Esophagus muscularis mucosa (tissue), 4 donors: ENCODE measurements at regions of chr1 and their contacts with region 1.

Region 1: DNA sequence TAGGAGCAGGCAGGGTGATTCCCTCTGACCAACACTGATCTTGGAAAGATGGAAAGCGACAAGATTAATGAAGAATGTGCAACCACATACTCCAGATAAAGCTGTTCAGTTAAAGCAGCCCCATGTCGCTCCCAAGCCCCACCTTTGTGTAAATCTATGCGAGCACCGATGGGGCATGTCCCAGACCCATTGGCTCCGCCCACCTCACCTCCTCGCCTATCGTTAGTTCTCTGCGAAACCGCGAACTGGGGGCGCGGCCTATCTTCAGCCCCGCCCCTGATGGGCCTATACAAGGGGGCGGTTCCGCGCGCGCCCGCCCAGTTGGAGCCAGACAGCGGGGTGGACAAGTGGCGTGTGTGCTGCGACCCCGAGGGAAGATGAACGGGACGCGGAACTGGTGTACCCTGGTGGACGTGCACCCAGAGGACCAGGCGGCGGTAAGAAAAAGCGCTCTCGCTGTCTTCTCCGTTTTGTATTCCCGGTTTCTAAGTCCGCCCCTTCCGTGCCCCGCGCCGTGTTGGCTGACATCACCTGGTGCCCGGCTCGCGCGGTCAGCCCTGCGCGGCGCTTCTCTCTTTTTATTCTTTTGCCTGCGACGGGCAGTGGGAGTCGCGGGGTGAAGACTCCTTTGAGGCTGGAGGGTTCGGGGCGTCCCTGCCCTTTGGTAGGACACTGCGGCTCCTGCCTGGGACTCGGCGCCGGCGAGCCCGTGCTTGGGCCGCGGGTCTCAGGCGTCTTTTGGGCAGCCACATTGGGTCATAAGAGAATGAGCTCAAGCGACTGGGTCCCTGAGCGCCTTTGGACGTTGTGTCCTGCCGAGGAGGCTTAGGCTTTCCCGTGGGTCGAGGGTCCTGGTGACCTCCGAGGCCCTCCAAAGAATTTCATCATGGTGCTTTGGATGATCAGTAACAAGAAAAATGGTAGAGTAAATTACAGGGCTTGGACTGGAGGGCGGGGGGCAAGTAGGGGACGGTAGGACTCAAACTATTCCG is at the start of gene TUFT1:
- DNase-seq: peak; percentile 98
- H3K4me3 ChIP-seq: peak within 1 kb of the TSS; percentile 73 to 81 (median 76)
- H3K27ac ChIP-seq: peak within 1 kb of the TSS; percentile 87 to 90 (median 88)
- H3K4me1 ChIP-seq: peaks cover 11 to 43% (median 36%) of the 10 kb centered on the region in 4 donors
- H3K27me3 ChIP-seq: no peaks in the 10 kb centered on the region
- CTCF ChIP-seq: no peak
- EP300 ChIP-seq: no peak
- POLR2A ChIP-seq: peak; percentile 86
- total RNA-seq, gene TUFT1: 10.4 to 24.2 (median 15.9) TPM

Region 2: DNA sequence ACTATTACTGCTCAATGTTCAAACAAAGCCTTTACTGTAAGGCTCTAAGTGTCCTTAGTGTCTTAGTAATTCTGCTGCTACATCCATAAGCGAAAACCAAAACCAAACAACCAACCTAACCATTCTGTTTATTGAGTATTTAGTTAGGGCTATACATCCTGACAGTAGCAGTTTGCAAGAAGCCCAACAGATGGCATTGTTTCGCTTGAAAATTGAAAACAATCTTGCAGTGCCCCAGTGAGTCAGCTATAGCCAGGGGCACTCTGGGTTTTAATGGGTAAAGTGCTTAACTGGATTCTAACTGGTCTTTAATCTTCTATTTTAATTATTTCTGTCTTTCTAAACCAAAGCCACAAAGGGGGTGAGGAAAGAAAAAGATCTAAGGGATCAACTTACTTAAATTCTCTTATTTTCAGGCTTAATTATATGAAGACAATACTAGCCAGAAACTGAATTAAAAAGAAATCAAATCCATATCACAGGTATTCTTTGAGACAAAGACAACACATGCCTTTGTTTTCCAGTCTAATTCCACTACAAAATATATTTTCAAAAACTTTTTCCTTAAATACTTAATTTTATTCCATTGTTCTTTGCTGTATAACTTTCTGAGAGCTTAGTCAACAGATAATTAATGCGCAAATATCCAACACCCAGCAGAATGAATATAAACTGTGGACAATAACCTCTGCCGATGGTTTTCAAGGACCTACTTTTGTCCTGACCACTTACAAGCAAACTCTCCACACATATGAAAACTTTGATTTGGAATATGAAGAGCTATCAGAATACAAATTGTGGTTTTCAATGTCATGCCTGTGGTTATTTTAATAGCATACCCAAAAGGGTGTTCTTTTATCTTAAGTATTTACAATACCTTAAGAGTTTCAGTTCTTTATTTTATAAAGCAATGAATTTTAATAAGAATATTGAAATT is 96.2 kb before region 1 on chr1:
- intact Hi-C with region 1: loop called (anchors 5 kb)
- DNase-seq: no peak
- H3K4me3 ChIP-seq: no peak overlapping the region
- H3K27ac ChIP-seq: peak overlapping the region; percentile 45 to 55 (median 55)
- H3K4me1 ChIP-seq: peaks cover 37 to 90% (median 76%) of the 10 kb centered on the region in 4 donors
- H3K27me3 ChIP-seq: no peaks in the 10 kb centered on the region
- CTCF ChIP-seq: peak; percentile 75 to 81 (median 80)
- EP300 ChIP-seq: no peak
- POLR2A ChIP-seq: no peak

Region 3: DNA sequence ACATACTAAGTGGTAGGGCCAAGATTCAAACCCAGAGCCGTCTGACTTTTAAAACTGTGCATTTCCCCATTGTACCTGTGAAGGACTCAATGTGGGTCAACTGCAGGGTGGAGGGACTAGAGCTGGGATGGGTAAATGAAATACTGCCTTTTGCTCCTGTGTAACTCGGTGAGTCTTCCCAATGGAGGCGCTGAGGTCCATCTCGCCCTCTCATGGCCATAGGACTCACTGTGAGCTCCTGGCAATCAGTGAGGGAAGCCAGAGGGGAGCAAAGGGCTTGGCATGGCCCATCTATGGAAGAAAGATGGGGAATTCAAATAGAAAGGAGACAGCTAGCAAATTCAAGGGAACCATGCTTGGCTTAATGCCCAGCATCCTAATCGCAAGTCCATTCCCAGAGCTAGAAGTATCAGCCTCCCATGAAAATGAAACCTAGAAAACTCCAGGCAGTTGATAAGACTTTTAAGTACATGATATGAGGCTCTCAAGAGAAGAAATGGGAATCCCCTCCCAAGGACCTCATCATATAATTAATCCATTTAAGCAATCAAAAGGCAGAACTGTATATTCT is 54.5 kb before region 1 on chr1:
- intact Hi-C with region 1: no loop called
- DNase-seq: no peak
- H3K4me3 ChIP-seq: no peak overlapping the region
- H3K27ac ChIP-seq: no peak overlapping the region
- H3K4me1 ChIP-seq: no peaks in the 10 kb centered on the region
- H3K27me3 ChIP-seq: no peaks in the 10 kb centered on the region
- CTCF ChIP-seq: no peak
- EP300 ChIP-seq: no peak
- POLR2A ChIP-seq: no peak